IMR-90 (cell line): ENCODE measurements at regions of chr15 and their contacts with region 1.

Region 1: GRCh38 chr15:50484781-50485180 is 60.6 kb downstream of the USP8 start:
- DNase-seq: no peak
- ATAC-seq: no peak
- H3K4me3 ChIP-seq: no peak overlapping the region
- H3K27ac ChIP-seq: no peak overlapping the region
- H3K4me1 ChIP-seq: no peaks in the 10 kb centered on the region
- H3K27me3 ChIP-seq: no peaks in the 10 kb centered on the region
- CTCF ChIP-seq: no peak
- POLR2A ChIP-seq: no peak
- RAD21 ChIP-seq: no peak

Region 2: DNA sequence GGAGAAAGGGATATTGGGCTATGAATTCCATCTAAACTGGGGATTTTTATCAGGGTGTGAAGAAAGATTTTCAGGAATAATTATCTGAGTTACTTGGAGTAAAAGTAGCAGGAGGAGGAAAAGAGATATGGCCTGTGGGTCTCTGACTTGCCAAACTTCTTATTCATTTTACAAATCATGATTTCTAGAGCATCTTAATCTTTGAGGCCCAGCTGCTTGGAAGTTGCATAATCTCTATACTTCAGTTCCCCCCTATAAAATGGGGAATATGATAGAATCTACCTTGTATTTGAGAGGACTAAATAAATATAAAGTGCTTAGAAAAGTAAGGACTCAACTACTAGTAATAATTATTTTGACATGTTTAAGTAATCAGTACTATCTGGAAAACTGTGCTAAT is 118.8 kb before region 1 on chr15:
- CTCF ChIA-PET with region 1: no interaction called
- POLR2A ChIA-PET with region 1: no interaction called
- dilution Hi-C with region 1: no loop called
- in situ Hi-C with region 1: no loop called
- intact Hi-C with region 1: no loop called
- DNase-seq: no peak
- ATAC-seq: no peak
- H3K4me3 ChIP-seq: no peak overlapping the region
- H3K27ac ChIP-seq: no peak overlapping the region
- H3K4me1 ChIP-seq: no peaks in the 10 kb centered on the region
- H3K27me3 ChIP-seq: no peaks in the 10 kb centered on the region
- CTCF ChIP-seq: no peak
- POLR2A ChIP-seq: no peak
- RAD21 ChIP-seq: no peak

Region 3: GRCh38 chr15:50415749-50416404 is 68.9 kb before region 1 on chr15:
- CTCF ChIA-PET with region 1: no interaction called
- POLR2A ChIA-PET with region 1: interaction called, 13 read pairs
- dilution Hi-C with region 1: no loop called
- in situ Hi-C with region 1: no loop called
- intact Hi-C with region 1: no loop called
- DNase-seq: peak; percentile 37
- ATAC-seq: peak; percentile 37; the same call in 1 of the 2 replicates
- H3K4me3 ChIP-seq: no peak overlapping the region
- H3K27ac ChIP-seq: no peak overlapping the region
- H3K4me1 ChIP-seq: no peaks in the 10 kb centered on the region
- H3K27me3 ChIP-seq: peaks cover 1% of the 10 kb centered on the region
- CTCF ChIP-seq: no peak
- POLR2A ChIP-seq: no peak
- RAD21 ChIP-seq: no peak

Region 4: GRCh38 chr15:50506121-50506520 is 21.3 kb after region 1 on chr15:
- CTCF ChIA-PET with region 1: no interaction called
- POLR2A ChIA-PET with region 1: interaction called, 13 read pairs
- dilution Hi-C with region 1: no loop called
- in situ Hi-C with region 1: no loop called
- intact Hi-C with region 1: no loop called
- DNase-seq: no peak
- ATAC-seq: no peak
- H3K4me3 ChIP-seq: no peak overlapping the region
- H3K27ac ChIP-seq: no peak overlapping the region
- H3K4me1 ChIP-seq: no peaks in the 10 kb centered on the region
- H3K27me3 ChIP-seq: no peaks in the 10 kb centered on the region
- CTCF ChIP-seq: no peak
- POLR2A ChIP-seq: no peak
- RAD21 ChIP-seq: no peak

Region 5: GRCh38 chr15:50735156-50735555 is 250.4 kb after region 1 on chr15:
- CTCF ChIA-PET with region 1: no interaction called
- POLR2A ChIA-PET with region 1: no interaction called
- dilution Hi-C with region 1: no loop called
- in situ Hi-C with region 1: no loop called
- intact Hi-C with region 1: no loop called
- DNase-seq: no peak
- ATAC-seq: no peak
- H3K4me3 ChIP-seq: no peak overlapping the region
- H3K27ac ChIP-seq: no peak overlapping the region
- H3K4me1 ChIP-seq: no peaks in the 10 kb centered on the region
- H3K27me3 ChIP-seq: no peaks in the 10 kb centered on the region
- CTCF ChIP-seq: no peak
- POLR2A ChIP-seq: no peak
- RAD21 ChIP-seq: no peak